Caco-2 (cell line): ENCODE measurements at regions of chr11 and their contacts with region 1.

Region 1: DNA sequence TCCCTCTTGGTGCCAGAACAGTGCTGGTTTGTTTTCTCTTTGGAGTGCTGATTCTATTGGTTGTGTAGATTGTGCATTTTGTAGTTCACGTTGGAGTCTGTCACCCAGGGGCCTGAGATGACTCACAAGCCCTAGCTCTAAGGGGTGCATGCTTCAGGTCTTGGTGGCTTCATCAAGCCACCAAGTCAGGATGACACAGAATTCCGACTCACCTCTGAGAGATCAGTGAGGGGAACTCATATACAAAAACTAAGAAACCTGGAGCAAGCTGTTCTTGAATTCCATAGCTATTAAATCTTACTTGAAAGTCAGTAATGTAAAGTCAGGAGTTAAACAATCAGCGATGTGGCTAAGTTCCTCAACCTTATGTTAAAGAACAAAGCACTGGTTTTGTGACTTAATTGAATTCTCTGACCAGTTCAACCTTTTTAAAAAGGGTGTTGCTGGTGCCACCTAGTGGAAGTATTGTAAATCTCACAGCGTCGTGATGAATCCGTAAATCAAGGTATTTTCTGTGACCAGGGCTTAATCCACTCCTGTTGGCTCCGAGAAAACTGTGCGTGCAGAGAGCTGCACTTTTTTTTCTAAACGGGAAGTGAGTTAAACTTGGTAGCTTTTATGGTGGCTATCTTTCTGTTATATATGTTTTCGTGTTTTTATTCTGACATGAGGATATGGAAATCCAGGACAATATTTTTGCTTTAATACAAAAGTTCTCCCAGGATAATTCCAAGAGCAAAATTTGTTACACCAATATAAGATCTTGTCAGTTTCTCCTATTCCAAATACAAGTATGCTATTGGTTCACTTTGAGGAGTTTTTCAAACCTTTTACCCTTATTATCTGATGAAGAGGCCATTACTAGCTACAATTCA is 14.6 kb downstream of the MMP13 start:
- DNase-seq: peak; percentile 66 to 76
- H3K4me3 ChIP-seq: no peak overlapping the region
- H3K4me3 Mint-ChIP-seq: no peak overlapping the region
- H3K27ac Mint-ChIP-seq: no peak overlapping the region
- H3K4me1 ChIP-seq: no peaks in the 10 kb centered on the region
- H3K4me1 Mint-ChIP-seq: no peaks in the 10 kb centered on the region
- H3K27me3 ChIP-seq: no peaks in the 10 kb centered on the region
- H3K27me3 Mint-ChIP-seq: no peaks in the 10 kb centered on the region
- CTCF ChIP-seq: peak; percentile 89 to 90

Region 2: DNA sequence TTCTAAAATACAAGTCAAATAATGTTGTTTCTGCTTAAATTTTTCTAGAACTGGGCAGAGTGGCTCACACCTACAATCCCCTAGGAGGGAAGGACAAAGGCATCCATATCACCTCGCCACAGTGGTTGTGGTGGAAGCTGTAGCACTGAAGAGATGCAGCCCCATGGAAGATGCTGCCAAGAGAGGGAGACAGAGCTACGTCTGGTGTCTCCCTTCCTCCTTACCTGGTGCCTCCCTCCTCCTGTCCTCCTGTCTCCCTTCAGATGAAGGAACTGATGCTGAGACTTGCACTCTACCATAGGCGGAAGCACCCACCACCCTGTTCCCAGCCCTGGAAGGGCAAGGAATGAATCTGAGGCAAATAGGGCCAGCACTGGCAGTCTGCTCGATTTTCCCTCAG is 257.7 kb before region 1 on chr11:
- CTCF ChIA-PET with region 1: no interaction called
- POLR2A ChIA-PET with region 1: no interaction called
- intact Hi-C with region 1: loop called (anchors 1 kb)
- DNase-seq: peak; percentile 47 to 63
- H3K4me3 ChIP-seq: no peak overlapping the region
- H3K4me3 Mint-ChIP-seq: no peak overlapping the region
- H3K27ac Mint-ChIP-seq: no peak overlapping the region
- H3K4me1 ChIP-seq: no peaks in the 10 kb centered on the region
- H3K4me1 Mint-ChIP-seq: no peaks in the 10 kb centered on the region
- H3K27me3 ChIP-seq: peaks cover 2% of the 10 kb centered on the region
- H3K27me3 Mint-ChIP-seq: peaks cover 10% of the 10 kb centered on the region
- CTCF ChIP-seq: peak; percentile 40 to 53

Region 3: DNA sequence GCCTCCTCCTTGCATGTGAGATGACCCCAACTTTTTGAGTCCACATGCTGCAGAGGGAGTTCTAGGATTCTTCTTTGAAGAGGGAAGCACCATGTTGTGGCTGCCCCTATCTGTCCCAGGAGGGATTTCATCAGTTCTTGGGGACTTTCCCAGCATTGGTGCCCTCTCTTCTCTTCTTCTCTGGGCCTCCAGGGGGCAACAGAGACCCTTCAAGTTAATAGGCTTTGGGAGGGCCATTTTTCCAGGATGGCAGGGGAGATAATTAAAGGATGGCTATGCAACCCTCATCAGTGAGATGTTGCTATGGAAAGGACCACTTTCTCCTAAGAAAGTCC is 146.5 kb before region 1 on chr11:
- CTCF ChIA-PET with region 1: interaction called, 3 read pairs
- POLR2A ChIA-PET with region 1: no interaction called
- intact Hi-C with region 1: loop called (anchors 1 kb)
- DNase-seq: peak; percentile 59 to 61
- H3K4me3 ChIP-seq: no peak overlapping the region
- H3K4me3 Mint-ChIP-seq: no peak overlapping the region
- H3K27ac Mint-ChIP-seq: no peak overlapping the region
- H3K4me1 ChIP-seq: 0 out of 2 replicates have a peak, but pooled peaks cover 5% of the 10 kb centered on the region
- H3K4me1 Mint-ChIP-seq: peaks cover 11% of the 10 kb centered on the region
- H3K27me3 ChIP-seq: no peaks in the 10 kb centered on the region; the same call in 1 of the 2 replicates
- H3K27me3 Mint-ChIP-seq: no peaks in the 10 kb centered on the region
- CTCF ChIP-seq: peak; percentile 58 to 63

Region 4: GRCh38 chr11:102810945-102811660 is 129.8 kb before region 1 on chr11:
- CTCF ChIA-PET with region 1: no interaction called
- POLR2A ChIA-PET with region 1: no interaction called
- intact Hi-C with region 1: loop called (anchors 1 kb)
- DNase-seq: peak in 1 of 2 experiments; percentile 49
- H3K4me3 ChIP-seq: no peak overlapping the region
- H3K4me3 Mint-ChIP-seq: no peak overlapping the region
- H3K27ac Mint-ChIP-seq: no peak overlapping the region
- H3K4me1 ChIP-seq: no peaks in the 10 kb centered on the region
- H3K4me1 Mint-ChIP-seq: no peaks in the 10 kb centered on the region
- H3K27me3 ChIP-seq: no peaks in the 10 kb centered on the region
- H3K27me3 Mint-ChIP-seq: no peaks in the 10 kb centered on the region
- CTCF ChIP-seq: peak; percentile 71 to 78

Region 5: GRCh38 chr11:102914238-102915043 is 26.5 kb before region 1 on chr11:
- CTCF ChIA-PET with region 1: interaction called, 19 read pairs
- POLR2A ChIA-PET with region 1: no interaction called
- intact Hi-C with region 1: loop called (anchors 1 kb)
- DNase-seq: peak in 1 of 2 experiments; percentile 58
- H3K4me3 ChIP-seq: no peak overlapping the region
- H3K4me3 Mint-ChIP-seq: no peak overlapping the region
- H3K27ac Mint-ChIP-seq: no peak overlapping the region
- H3K4me1 ChIP-seq: no peaks in the 10 kb centered on the region
- H3K4me1 Mint-ChIP-seq: no peaks in the 10 kb centered on the region
- H3K27me3 ChIP-seq: no peaks in the 10 kb centered on the region
- H3K27me3 Mint-ChIP-seq: no peaks in the 10 kb centered on the region
- CTCF ChIP-seq: peak; percentile 79 to 88